Sigmoid colon (tissue), 7 donors: ENCODE measurements at regions of chr1 and their contacts with region 1.

Region 1: GRCh38 chr1:164953098-164953497 is 394.1 kb downstream of the PBX1 start:
- DNase-seq: no peak
- H3K4me3 ChIP-seq: no peak overlapping the region
- H3K27ac ChIP-seq: peak overlapping the region in 1 of 4 donors; percentile 71
- H3K4me1 ChIP-seq: peaks cover 0 to 54% (median 36%) of the 10 kb centered on the region in 4 donors
- H3K27me3 ChIP-seq: no peaks in the 10 kb centered on the region
- CTCF ChIP-seq: no peak
- EP300 ChIP-seq: no peak
- POLR2A ChIP-seq: no peak

Region 2: DNA sequence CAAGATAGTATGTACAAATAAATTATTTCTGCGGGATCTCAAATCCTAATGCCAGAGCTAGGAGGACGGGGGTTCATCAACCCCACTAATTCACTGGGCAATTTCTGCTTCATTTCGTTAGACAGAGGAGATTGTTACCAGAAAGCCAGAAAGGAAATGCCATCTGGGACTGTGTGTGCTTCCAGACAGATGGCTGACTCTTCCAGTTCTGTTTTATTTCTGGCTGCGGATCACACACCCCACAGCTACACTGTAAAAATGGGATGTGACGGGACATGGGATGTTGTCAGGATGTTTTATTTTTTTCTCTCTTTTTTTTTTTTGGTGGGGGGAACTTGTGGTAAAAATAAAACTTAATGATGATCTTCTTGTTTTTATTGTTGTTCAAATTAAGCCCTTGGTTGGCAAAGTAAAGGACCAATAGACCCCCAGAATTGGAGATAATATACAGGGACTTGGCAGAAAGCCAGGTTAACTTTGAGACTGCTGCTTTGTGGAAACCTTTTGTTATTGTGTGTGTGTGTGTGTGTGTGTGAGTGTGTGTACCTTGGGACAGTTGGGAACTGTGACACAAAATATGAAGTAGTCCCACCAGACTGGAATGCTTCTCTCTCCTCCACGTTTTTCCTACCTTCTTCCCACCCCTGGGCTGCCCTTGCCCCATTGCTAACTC is 1516.8 kb before region 1 on chr1:
- intact Hi-C with region 1: loop called (anchors 10 kb)
- DNase-seq: peak; percentile 69
- H3K4me3 ChIP-seq: no peak overlapping the region
- H3K27ac ChIP-seq: peak overlapping the region in 3 of 4 donors; percentile 33 to 52 (median 43)
- H3K4me1 ChIP-seq: peaks cover 0 to 50% (median 37%) of the 10 kb centered on the region in 4 donors
- H3K27me3 ChIP-seq: no peaks in the 10 kb centered on the region
- CTCF ChIP-seq: no peak
- EP300 ChIP-seq: peak in 1 of 4 donors; percentile 41
- POLR2A ChIP-seq: no peak

Region 3: DNA sequence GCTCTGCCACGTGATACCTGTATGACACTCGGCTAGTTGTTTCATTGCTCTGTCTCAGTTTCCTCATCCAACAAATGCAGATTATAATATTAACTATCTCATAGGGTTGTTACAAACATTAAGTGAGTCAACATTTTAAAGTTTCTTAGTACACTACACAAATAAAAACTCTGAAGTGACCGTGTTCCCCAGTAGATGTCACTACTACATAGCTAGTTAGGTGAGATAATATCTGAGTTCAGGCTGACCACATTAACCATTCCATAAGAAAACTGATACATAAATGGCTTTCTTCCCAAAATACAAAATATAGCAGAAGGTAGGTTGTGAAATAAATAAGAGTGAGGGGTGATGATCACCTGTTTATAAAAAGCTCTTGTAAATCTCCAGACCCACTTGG is 1417.3 kb before region 1 on chr1:
- intact Hi-C with region 1: loop called (anchors 5 kb)
- DNase-seq: no peak
- H3K4me3 ChIP-seq: no peak overlapping the region
- H3K27ac ChIP-seq: no peak overlapping the region
- H3K4me1 ChIP-seq: peaks cover 0 to 22% (median 20%) of the 10 kb centered on the region in 4 donors
- H3K27me3 ChIP-seq: no peaks in the 10 kb centered on the region
- CTCF ChIP-seq: peak in 3 of 4 experiments; percentile 6 to 29 (median 10)
- EP300 ChIP-seq: no peak
- POLR2A ChIP-seq: no peak

Region 4: DNA sequence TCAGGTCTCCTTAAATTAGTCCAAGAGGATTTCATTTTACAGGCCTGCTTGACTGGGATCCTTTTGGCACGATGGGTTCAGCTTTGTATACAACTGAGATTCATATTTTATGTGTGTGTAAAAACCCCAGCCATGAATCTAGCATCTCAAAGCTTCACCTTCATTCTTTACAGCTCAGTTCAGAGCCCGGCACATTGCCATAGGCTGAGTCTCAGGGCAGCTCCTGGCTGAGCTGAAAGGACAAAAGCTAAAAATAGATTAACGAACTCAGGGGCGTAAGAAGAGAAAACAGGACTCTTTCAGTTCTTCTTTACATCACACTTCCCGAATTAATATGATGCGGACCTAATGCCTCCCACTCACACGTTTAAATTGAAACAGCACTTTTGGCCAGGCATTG is 656.9 kb before region 1 on chr1:
- intact Hi-C with region 1: loop called (anchors 2 kb)
- DNase-seq: peak; percentile 91
- H3K4me3 ChIP-seq: peak overlapping the region in 3 of 4 donors; percentile 19 to 36 (median 30)
- H3K27ac ChIP-seq: peak overlapping the region; percentile 62 to 82 (median 81)
- H3K4me1 ChIP-seq: peaks cover 0 to 16% (median 13%) of the 10 kb centered on the region in 4 donors
- H3K27me3 ChIP-seq: no peaks in the 10 kb centered on the region
- CTCF ChIP-seq: no peak
- EP300 ChIP-seq: peak; percentile 23 to 62 (median 44)
- POLR2A ChIP-seq: no peak

Region 5: DNA sequence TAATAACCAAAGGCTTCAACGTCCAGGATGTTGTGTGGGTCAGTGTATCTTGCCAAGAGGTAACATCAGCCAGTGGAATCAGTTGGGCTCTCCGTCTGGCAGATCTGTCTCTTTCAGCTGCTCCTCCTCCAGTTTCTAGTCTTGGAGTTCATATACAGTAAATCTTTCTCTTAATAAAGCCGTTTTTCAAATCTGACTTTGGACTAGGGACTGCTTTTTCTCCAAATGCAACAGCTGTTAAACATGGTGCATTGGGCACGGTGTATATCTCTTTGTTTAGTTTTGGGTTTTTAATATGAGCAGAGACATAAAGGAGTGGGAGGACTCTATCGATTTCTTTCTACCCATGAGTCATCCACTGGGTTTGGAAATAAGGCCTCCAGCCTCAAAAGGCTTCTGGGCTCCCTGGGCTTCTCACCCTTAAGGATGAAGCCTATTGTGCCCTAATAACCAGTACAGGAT is 308.3 kb before region 1 on chr1:
- intact Hi-C with region 1: loop called (anchors 5 kb)
- DNase-seq: no peak
- H3K4me3 ChIP-seq: no peak overlapping the region
- H3K27ac ChIP-seq: peak overlapping the region; percentile 67 to 86 (median 82)
- H3K4me1 ChIP-seq: peaks cover 0 to 92% (median 91%) of the 10 kb centered on the region in 4 donors
- H3K27me3 ChIP-seq: no peaks in the 10 kb centered on the region
- CTCF ChIP-seq: no peak
- EP300 ChIP-seq: peak in 3 of 4 donors; percentile 30 to 79 (median 67)
- POLR2A ChIP-seq: no peak

Region 6: DNA sequence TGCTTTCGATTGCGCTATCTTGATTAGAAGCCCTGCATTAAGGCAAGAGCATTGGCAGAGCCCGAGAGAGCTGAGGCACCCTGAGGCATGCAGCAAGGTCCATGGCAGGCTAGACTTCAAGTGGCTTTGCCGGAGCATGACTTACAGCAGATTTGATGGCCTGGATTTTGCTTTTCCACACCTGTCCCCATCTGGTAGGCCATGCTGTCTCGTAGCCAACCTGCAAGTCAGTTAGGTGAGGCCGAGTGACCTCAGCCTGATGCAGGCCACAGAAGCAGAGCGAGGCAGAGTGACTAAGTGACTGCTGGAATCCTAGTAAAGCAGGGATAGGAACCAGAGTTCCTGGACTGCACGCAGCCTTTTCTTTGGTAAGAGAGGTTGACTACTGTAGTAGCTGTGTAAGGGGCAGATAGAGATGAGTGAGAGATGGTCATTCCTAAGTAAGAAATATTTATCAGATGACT is 245.2 kb before region 1 on chr1:
- intact Hi-C with region 1: loop called (anchors 1 kb)
- DNase-seq: peak; percentile 79
- H3K4me3 ChIP-seq: peak overlapping the region in 1 of 4 donors; percentile 0
- H3K27ac ChIP-seq: peak overlapping the region; percentile 77 to 87 (median 80)
- H3K4me1 ChIP-seq: peaks cover 0 to 96% (median 88%) of the 10 kb centered on the region in 4 donors
- H3K27me3 ChIP-seq: no peaks in the 10 kb centered on the region
- CTCF ChIP-seq: no peak
- EP300 ChIP-seq: no peak
- POLR2A ChIP-seq: no peak

Region 7: GRCh38 chr1:164823486-164824279 is 129.4 kb before region 1 on chr1:
- intact Hi-C with region 1: loop called (anchors 1 kb)
- DNase-seq: peak; percentile 89
- H3K4me3 ChIP-seq: no peak overlapping the region
- H3K27ac ChIP-seq: peak overlapping the region; percentile 69 to 85 (median 80)
- H3K4me1 ChIP-seq: peaks cover 0 to 58% (median 56%) of the 10 kb centered on the region in 4 donors
- H3K27me3 ChIP-seq: no peaks in the 10 kb centered on the region
- CTCF ChIP-seq: peak in 3 of 4 experiments; percentile 10 to 34 (median 14)
- EP300 ChIP-seq: peak; percentile 72 to 93 (median 89)
- POLR2A ChIP-seq: no peak

Region 8: DNA sequence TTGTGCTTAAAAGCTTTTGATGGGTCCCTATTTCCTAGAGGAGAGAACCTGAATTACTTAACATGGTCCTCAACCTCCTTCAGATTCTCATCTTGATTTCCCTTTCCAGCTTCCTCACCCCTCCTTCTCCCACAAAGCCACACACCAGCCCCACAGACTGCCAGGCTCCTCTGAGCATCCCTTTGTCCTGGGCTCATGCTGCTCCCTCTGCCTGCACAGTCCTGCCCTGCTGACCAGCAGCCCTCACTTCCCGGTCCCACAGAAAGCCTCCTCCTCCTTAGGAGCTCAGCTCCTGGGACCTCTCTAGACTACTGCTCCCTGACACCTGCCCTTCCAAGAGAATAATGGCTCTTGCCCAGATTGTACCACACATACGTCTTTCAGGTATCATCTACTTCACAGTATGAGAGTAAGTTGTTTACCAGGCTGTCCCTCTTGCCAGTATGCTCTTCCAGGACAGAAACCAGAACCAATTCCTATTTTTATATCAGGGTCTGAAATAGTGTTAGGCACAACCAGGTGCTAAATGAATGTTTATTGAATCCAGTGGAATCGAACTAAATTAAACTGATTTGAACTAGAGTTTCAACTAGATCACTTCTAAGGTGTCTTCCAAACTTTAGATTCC is 30.0 kb after region 1 on chr1:
- intact Hi-C with region 1: no loop called
- DNase-seq: peak; percentile 70
- H3K4me3 ChIP-seq: no peak overlapping the region
- H3K27ac ChIP-seq: peak overlapping the region in 2 of 4 donors; percentile 7 to 32
- H3K4me1 ChIP-seq: peaks cover 0 to 54% (median 35%) of the 10 kb centered on the region in 4 donors
- H3K27me3 ChIP-seq: no peaks in the 10 kb centered on the region
- CTCF ChIP-seq: no peak
- EP300 ChIP-seq: no peak
- POLR2A ChIP-seq: no peak

Region 9: DNA sequence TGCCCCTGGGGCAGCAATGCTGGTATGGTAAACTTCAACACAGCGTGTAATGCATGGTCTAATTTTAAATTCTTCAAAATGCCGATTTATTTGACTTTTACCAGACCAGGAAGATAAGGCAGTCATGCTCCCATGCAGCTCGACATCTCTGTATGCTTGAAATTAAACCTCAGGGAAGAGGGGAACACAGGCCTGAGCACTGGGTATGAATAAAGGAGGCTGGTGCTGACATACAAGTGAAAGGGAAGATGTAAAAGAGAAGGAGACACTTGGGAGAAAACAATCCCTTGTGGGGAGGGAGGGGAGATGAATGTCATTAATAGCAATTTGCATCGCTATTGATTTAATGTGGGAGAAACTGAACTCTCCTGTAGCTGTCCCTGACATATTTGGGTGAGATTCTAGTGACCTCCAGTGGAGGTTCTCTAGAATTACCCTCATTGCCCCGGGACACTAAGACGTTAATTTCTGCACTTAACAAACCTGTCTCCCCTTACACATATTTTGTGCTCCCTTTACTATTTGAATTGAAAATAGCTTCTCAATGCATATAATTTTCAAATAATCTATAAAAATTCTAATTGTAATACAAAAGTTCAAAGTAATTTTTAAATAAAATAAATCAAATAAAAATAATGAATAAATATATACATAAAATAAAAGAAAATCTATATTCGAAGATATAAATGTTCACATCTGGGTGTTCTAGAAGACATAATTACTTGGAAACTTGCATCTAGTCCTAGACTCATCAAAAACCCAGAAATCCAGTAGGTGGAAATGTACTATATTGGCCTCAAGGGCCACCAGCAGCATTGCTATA is 120.3 kb after region 1 on chr1:
- intact Hi-C with region 1: no loop called
- DNase-seq: no peak
- H3K4me3 ChIP-seq: no peak overlapping the region
- H3K27ac ChIP-seq: peak overlapping the region in 3 of 4 donors; percentile 19 to 46 (median 42)
- H3K4me1 ChIP-seq: peaks cover 0 to 43% (median 19%) of the 10 kb centered on the region in 4 donors
- H3K27me3 ChIP-seq: no peaks in the 10 kb centered on the region
- CTCF ChIP-seq: peak; percentile 65 to 80 (median 78)
- EP300 ChIP-seq: no peak
- POLR2A ChIP-seq: no peak